ENCODE measurements at regions of chr13 and their contacts with region 1.

Region 1: DNA sequence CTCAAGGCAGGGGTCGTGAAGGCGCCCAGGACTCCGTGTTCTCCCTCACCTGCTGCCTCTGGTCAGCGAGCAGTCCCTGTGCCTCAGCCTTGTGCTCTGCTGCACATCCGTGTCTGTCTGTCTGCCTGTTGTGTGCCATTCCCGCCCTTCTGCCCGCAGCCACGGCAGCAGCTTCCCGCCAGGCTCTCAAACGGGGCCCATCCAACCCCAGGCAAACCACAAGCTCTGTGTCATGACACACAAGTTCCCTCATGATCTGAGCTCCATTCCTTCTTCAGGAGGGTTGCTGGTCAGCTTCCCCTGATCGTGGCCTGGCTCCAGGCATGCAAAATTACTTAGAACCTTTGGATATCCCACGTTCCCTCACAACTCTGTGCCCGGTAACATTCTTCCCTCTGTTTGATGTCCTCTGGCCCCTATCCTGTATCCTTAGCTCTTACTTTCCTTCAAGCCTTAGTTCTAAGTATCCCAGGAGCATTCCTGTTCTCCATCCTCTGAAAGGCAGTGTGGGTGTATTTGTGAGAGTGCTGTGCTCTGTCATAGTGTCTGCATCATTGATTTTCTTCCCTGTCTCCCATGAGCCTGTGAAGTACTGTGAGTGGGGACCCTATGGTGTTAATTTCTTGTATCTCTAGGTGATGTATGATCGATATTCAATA is 3.2 kb downstream of the GPR183 start:
- DNase-seq: no peak
- H3K4me3 ChIP-seq: peak overlapping the region in 1 of 2 donors; percentile 50
- H3K27ac ChIP-seq: no peak overlapping the region
- H3K4me1 ChIP-seq: peaks cover 0 to 21% of the 10 kb centered on the region in 2 donors
- H3K27me3 ChIP-seq: no peaks in the 10 kb centered on the region
- CTCF ChIP-seq: no peak

Region 2: DNA sequence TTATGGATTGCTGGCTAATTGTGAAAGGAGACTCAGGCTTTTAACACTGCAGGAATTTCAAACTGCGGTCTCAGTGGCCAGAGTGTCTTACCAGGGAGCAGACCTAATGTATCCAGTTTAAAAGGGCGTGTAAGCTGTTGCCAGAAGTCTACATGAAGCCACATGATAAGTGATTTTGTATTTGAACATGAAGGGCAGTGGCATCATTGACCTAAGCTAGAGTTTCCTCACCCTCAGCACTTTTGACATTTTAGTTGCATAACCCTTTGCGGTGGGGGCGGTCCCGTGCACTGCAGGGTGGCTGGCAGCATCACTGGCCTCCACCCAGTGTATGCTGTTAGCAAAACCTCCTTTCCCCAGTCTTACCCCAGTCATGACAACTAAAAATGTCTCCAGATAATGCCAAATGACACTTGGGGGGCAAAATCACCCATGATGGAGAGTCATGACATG is 22.2 kb before region 1 on chr13:
- intact Hi-C with region 1: loop called (anchors 2 kb)
- DNase-seq: peak; percentile 34 to 83
- H3K4me3 ChIP-seq: no peak overlapping the region
- H3K27ac ChIP-seq: peak overlapping the region; percentile 59 to 62
- H3K4me1 ChIP-seq: peaks cover 5 to 18% of the 10 kb centered on the region in 2 donors
- H3K27me3 ChIP-seq: no peaks in the 10 kb centered on the region
- CTCF ChIP-seq: no peak

Region 3: GRCh38 chr13:99528547-99528946 is 224.6 kb after region 1 on chr13:
- intact Hi-C with region 1: no loop called
- DNase-seq: no peak
- H3K4me3 ChIP-seq: no peak overlapping the region
- H3K27ac ChIP-seq: no peak overlapping the region
- H3K4me1 ChIP-seq: no peaks in the 10 kb centered on the region
- H3K27me3 ChIP-seq: no peaks in the 10 kb centered on the region
- CTCF ChIP-seq: no peak